CD4-positive, alpha-beta memory T cell (primary cell): ENCODE measurements at regions of chr14 and their contacts with region 1.

Region 1: DNA sequence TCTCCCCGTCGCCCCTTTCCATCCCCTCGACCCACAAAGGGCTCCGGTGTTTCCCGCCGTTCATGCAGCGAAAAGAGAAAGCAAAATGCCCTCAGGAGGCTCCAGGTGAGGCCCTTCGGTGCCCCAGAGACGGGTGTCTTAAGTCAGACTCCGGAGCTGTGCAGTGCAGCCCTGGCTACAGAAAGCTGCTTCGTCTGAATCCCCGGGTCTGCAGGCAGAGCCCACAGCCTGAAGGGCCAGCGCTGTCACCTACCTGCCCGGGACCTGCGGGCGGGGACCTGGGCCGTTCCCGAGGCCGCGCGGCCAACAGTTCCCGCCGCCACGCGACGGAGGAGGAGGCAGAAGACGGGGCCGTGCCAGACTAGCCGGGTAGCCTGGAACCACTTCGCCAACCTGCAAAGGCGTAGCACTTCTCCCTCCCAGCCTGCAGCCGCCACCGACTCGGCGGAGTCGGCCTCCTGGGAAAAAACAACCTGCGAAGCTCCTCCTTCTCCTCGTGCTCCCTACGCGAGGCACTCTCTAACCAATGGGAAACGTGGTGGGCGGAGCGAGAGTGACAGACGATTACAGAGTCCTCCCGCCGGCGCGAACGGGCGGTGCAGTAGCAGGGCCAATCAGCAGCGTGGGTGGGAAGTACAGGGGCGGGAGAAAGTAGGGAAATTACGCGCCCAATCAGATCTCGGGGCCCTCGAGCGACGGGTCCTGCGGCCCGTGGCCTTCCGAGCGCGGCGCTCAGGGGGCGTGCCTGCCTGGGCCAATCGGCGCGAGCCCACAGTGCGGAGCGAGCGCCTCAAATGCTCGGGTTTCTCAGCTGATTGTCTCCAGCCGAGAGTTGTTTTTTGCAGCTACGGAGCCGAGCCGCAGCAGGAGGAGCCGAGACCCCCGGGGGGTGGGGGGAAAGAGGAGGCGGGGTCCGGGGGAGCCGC is at the starts of genes GPR137C and TXNDC16:
- DNase-seq: peak; percentile 97 to 100 (median 99)
- H3K4me3 ChIP-seq: peak within 1 kb of the TSS; percentile 67 to 90
- H3K4me3 Mint-ChIP-seq: peak within 1 kb of the TSS; percentile 92 to 99 (median 96)
- H3K27ac ChIP-seq: peak within 1 kb of the TSS; percentile 87
- H3K27ac Mint-ChIP-seq: peak within 1 kb of the TSS; percentile 91 to 99 (median 95)
- H3K4me1 ChIP-seq: peaks cover 23% of the 10 kb centered on the region
- H3K4me1 Mint-ChIP-seq: peaks cover 19 to 39% (median 29%) of the 10 kb centered on the region in 4 donors
- H3K27me3 ChIP-seq: no peaks in the 10 kb centered on the region
- H3K27me3 Mint-ChIP-seq: no peaks in the 10 kb centered on the region
- total RNA-seq, gene GPR137C: 0.20 TPM in 1 of 2 experiments, not detected in the other
- total RNA-seq, gene TXNDC16: 7.0 to 7.6 TPM

Region 2: GRCh38 chr14:51651388-51652167 is 900.7 kb before region 1 on chr14 and contains the start of gene FRMD6:
- CTCF ChIA-PET with region 1: no interaction called
- POLR2A ChIA-PET with region 1: no interaction called
- intact Hi-C with region 1: loop called (anchors 5 kb)
- DNase-seq: peak; percentile 82 to 89 (median 83)
- H3K4me3 ChIP-seq: peak within 1 kb of the TSS; percentile 47 to 77
- H3K4me3 Mint-ChIP-seq: peak within 1 kb of the TSS; percentile 82 to 92 (median 85)
- H3K27ac ChIP-seq: peak within 1 kb of the TSS; percentile 36
- H3K27ac Mint-ChIP-seq: peak within 1 kb of the TSS in 6 of 7 donors; percentile 66 to 84 (median 72)
- H3K4me1 ChIP-seq: peaks cover 19% of the 10 kb centered on the region
- H3K4me1 Mint-ChIP-seq: peaks cover 7 to 16% (median 11%) of the 10 kb centered on the region in 4 donors
- H3K27me3 ChIP-seq: peaks cover 14% of the 10 kb centered on the region
- H3K27me3 Mint-ChIP-seq: peaks cover 14 to 18% of the 10 kb centered on the region in 2 donors
- total RNA-seq, gene FRMD6: 0.80 to 0.81 TPM

Region 3: GRCh38 chr14:51989293-51990234 is 562.8 kb before region 1 on chr14 and contains the start of gene RTRAF:
- CTCF ChIA-PET with region 1: no interaction called
- POLR2A ChIA-PET with region 1: interaction called, 4 read pairs
- intact Hi-C with region 1: loop called (anchors 1 kb)
- DNase-seq: peak; percentile 91 to 93 (median 92)
- H3K4me3 ChIP-seq: peak within 1 kb of the TSS; percentile 63 to 80
- H3K4me3 Mint-ChIP-seq: peak within 1 kb of the TSS; percentile 93 to 100 (median 98)
- H3K27ac ChIP-seq: peak within 1 kb of the TSS; percentile 87
- H3K27ac Mint-ChIP-seq: peak within 1 kb of the TSS; percentile 87 to 100 (median 98)
- H3K4me1 ChIP-seq: peaks cover 42% of the 10 kb centered on the region
- H3K4me1 Mint-ChIP-seq: peaks cover 27 to 39% (median 30%) of the 10 kb centered on the region in 4 donors
- H3K27me3 ChIP-seq: no peaks in the 10 kb centered on the region
- H3K27me3 Mint-ChIP-seq: no peaks in the 10 kb centered on the region
- total RNA-seq, gene RTRAF: 105 to 114 TPM

Region 4: GRCh38 chr14:52640137-52640536 is 87.8 kb after region 1 on chr14:
- CTCF ChIA-PET with region 1: no interaction called
- POLR2A ChIA-PET with region 1: no interaction called
- intact Hi-C with region 1: loop called (anchors 5 kb)
- DNase-seq: no peak
- H3K4me3 ChIP-seq: no peak overlapping the region
- H3K4me3 Mint-ChIP-seq: no peak overlapping the region
- H3K27ac ChIP-seq: no peak overlapping the region
- H3K27ac Mint-ChIP-seq: peak overlapping the region in 1 of 7 donors; percentile 0
- H3K4me1 ChIP-seq: no peaks in the 10 kb centered on the region
- H3K4me1 Mint-ChIP-seq: no peaks in the 10 kb centered on the region
- H3K27me3 ChIP-seq: no peaks in the 10 kb centered on the region
- H3K27me3 Mint-ChIP-seq: no peaks in the 10 kb centered on the region

Region 5: GRCh38 chr14:52729925-52730667 is 177.8 kb after region 1 on chr14 and contains the start of gene STYX:
- CTCF ChIA-PET with region 1: no interaction called
- POLR2A ChIA-PET with region 1: interaction called, 8 read pairs
- intact Hi-C with region 1: loop called (anchors 1 kb)
- DNase-seq: peak; percentile 95 to 97 (median 96)
- H3K4me3 ChIP-seq: peak within 1 kb of the TSS; percentile 71
- H3K4me3 Mint-ChIP-seq: peak within 1 kb of the TSS; percentile 80 to 96 (median 93)
- H3K27ac ChIP-seq: peak within 1 kb of the TSS; percentile 88
- H3K27ac Mint-ChIP-seq: peak within 1 kb of the TSS; percentile 79 to 97 (median 95)
- H3K4me1 ChIP-seq: peaks cover 36% of the 10 kb centered on the region
- H3K4me1 Mint-ChIP-seq: peaks cover 17 to 53% (median 38%) of the 10 kb centered on the region in 4 donors
- H3K27me3 ChIP-seq: no peaks in the 10 kb centered on the region
- H3K27me3 Mint-ChIP-seq: no peaks in the 10 kb centered on the region
- total RNA-seq, gene STYX: 47.1 to 47.3 TPM

Region 6: DNA sequence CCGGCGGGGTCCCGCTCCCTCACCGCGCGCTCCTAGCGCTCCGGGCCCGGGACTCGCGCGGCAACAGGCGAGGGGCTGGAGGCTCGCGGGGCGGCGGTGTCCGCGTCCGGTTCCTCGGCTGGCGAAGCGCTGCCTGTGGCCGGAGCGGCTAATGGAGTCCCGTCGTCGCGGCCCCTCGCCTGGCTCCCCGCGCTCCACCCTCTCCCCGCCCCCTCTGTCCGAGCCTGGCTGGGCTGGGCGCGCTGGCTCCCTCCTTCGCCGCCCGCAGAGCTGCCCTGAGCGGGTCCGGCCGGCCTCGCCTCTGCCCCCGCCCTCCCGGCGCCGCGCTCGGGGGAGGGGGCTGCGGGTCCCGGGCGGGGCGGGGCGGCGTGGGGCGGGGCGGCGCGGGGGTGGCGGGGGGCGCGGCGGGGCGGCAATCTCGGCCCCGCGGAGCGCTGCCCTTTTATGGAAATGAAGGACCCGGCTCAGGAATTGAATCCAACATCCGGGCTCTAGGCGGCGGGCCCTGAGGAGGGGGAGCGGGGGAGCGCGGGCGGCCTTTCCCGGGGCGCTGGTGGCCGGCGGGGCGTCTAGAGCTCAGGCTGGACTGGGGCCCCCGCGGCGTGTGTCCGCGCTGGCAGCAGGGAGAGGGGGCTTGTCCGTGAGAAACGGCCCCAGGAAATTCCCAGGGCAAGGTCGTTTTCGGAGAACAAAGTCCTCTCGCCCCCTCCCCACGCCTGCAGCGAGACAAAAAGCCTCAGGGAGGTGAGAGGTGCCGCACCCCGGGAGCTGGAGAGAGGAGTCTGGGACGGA is 398.8 kb after region 1 on chr14 and contains the start of gene FERMT2:
- CTCF ChIA-PET with region 1: no interaction called
- POLR2A ChIA-PET with region 1: no interaction called
- intact Hi-C with region 1: loop called (anchors 5 kb)
- DNase-seq: peak in 4 of 5 donors; percentile 6 to 25 (median 11)
- H3K4me3 ChIP-seq: peak within 1 kb of the TSS; percentile 47 to 49
- H3K4me3 Mint-ChIP-seq: peak within 1 kb of the TSS; percentile 79 to 91 (median 85)
- H3K27ac ChIP-seq: no peak within 1 kb of the TSS
- H3K27ac Mint-ChIP-seq: peak within 1 kb of the TSS in 6 of 7 donors; percentile 5 to 65 (median 37)
- H3K4me1 ChIP-seq: peaks cover 20% of the 10 kb centered on the region
- H3K4me1 Mint-ChIP-seq: peaks cover 18 to 27% (median 21%) of the 10 kb centered on the region in 4 donors
- H3K27me3 ChIP-seq: peaks cover 45% of the 10 kb centered on the region
- H3K27me3 Mint-ChIP-seq: peaks cover 34 to 36% of the 10 kb centered on the region in 2 donors
- total RNA-seq, gene FERMT2: 0.75 to 0.79 TPM